ENCODE measurements at regions of chr2 and their contacts with region 1.

Region 1: DNA sequence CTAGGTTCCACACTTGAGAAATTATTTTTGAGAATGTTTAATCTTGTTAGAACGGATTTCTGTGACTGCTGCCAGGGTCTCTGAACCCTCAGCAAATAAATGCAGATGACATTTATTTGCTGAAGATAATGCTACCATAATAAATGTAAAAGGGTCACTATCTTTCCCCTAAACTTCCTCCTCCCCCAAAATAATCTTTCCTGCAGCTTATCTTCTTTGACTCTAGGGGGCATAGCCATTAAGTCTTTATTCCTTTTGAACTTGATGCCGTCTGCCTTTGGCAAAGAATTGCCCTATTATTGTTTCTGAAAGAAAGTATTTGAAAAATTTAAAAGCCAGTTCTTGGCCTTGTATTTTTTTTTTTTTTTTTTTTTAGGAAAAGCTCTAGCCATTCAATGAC is 63.6 kb upstream of the ACSL3 start:
- DNase-seq: peak; percentile 32 to 45
- ATAC-seq: peak; percentile 60 to 66; a peak in 3 of 6 replicates
- H3K4me3 ChIP-seq: no peak overlapping the region
- H3K27ac ChIP-seq: peak overlapping the region; percentile 52 to 72; a peak in 5 of 6 replicates
- H3K4me1 ChIP-seq: peaks cover 28% of the 10 kb centered on the region
- CTCF ChIP-seq: peak; percentile 53
- EP300 ChIP-seq: no peak
- POLR2A ChIP-seq: no peak
- RAD21 ChIP-seq: peak; percentile 50 to 52; a peak in 4 of 5 replicates

Region 2: DNA sequence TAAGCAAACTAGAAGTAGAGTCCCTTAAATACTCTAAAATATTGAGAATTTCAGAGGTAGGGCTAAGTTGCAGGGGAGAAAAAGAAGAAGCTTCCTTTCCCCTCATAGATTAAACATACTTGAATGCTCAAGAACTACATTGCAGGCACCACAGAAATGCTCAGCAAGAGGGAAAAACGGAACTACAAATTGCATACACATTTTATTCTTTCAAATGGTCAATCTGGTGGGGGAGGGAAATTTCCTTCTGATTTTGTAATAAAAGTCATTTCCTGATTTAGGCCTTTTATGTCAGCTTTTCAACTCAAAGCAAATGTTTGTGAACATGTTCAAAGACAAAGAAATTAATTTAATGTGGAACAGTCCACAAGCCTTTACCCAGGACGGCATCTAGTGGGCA is 174.4 kb before region 1 on chr2:
- CTCF ChIA-PET with region 1: no interaction called
- POLR2A ChIA-PET with region 1: no interaction called
- DNase-seq: no peak
- ATAC-seq: no peak
- H3K4me3 ChIP-seq: no peak overlapping the region
- H3K27ac ChIP-seq: no peak overlapping the region
- H3K4me1 ChIP-seq: no peaks in the 10 kb centered on the region
- CTCF ChIP-seq: no peak
- EP300 ChIP-seq: no peak
- POLR2A ChIP-seq: no peak
- RAD21 ChIP-seq: no peak

Region 3: DNA sequence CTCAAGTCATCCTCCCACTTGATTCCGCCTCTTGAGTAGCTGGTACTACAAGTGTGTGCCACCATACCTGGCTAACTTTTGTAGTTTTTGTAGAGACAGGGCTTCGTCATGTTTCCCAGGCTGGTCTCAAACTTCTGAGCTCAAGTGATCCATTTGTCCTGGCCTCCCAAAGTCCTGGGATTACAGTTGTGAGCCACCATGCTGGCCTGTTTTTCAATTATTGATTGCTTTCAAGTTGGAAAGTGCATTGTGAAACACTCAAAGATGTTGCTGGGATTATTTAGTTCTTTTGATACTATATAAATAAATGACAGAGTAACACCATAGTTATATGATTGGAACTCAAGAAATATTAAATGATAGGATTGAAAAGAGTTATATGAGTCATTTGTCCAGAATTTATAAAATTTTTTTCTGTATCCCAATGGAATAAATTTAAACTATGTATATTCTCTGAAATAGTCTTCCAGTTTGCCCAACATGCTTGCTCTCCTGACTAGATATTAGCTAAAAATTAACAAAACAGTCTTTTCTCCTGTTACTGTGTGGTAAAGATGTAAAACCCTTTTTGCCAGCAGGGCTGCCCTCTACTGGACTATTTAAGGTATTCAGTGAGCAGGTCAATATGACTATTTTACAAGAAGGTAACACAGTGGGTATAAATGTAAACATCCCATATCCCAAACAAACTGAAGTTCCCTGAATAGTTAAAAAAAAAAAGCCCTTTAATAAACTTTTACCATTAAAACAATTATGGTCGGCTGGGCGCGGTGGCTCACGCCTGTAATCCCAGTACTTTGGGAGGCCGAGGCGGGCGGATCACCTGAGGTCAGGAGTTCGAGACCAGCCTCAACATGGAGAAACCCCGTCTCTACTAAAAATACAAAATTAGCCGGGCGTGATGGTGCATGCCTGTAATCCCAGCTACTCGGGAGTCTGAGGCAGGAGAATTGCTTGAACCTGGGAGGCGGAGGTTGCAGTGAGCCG is 106.3 kb after region 1 on chr2:
- CTCF ChIA-PET with region 1: interaction called, 17 read pairs
- POLR2A ChIA-PET with region 1: no interaction called
- DNase-seq: peak; percentile 52 to 72
- ATAC-seq: peak; percentile 69 to 83
- H3K4me3 ChIP-seq: no peak overlapping the region
- H3K27ac ChIP-seq: peak overlapping the region; percentile 13 to 61; a peak in 4 of 6 replicates
- H3K4me1 ChIP-seq: peaks cover 63% of the 10 kb centered on the region
- CTCF ChIP-seq: peak; percentile 78
- EP300 ChIP-seq: no peak
- POLR2A ChIP-seq: no peak
- RAD21 ChIP-seq: peak; percentile 82 to 86

Region 4: DNA sequence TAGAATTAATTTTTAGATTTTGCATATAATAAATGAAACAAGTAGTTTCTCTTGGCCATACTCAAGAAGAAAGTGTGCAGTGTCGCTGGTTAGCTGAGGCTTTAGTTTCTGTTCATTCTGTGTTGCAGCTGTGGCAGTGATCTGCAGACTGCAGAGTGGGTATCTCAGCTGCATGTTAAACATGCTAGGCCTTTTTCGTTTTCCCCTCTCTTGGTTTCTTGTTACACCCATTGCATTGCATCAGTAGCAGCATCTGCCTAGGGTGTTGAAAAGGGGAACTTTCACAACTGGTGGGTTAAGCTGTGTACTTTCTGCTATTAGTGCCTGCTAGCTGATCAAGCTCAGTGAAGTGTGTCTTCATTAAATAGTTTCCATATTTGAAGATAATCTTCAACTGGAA is 114.9 kb after region 1 on chr2:
- CTCF ChIA-PET with region 1: interaction called, 17 read pairs
- POLR2A ChIA-PET with region 1: no interaction called
- DNase-seq: no peak
- ATAC-seq: no peak
- H3K4me3 ChIP-seq: no peak overlapping the region
- H3K27ac ChIP-seq: no peak overlapping the region
- H3K4me1 ChIP-seq: peaks cover 19% of the 10 kb centered on the region
- CTCF ChIP-seq: no peak
- EP300 ChIP-seq: no peak
- POLR2A ChIP-seq: no peak
- RAD21 ChIP-seq: no peak